OCI-LY7 (cell line): ENCODE measurements at regions of chr6 and their contacts with region 1.

Region 1: GRCh38 chr6:142146828-142147662 is at the starts of genes NMBR and VTA1:
- DNase-seq: peak; percentile 99
- H3K4me3 ChIP-seq: peak within 1 kb of the TSS; percentile 96
- H3K27ac ChIP-seq: peak within 1 kb of the TSS; percentile 26
- H3K4me1 ChIP-seq: peaks cover 20% of the 10 kb centered on the region
- CTCF ChIP-seq: peak; percentile 97
- total RNA-seq, gene NMBR: not detected in 2 replicates
- total RNA-seq, gene VTA1: 21.6 and 37.9 TPM in 2 replicates

Region 2: GRCh38 chr6:140697585-140697984 is 1449.5 kb before region 1 on chr6:
- CTCF ChIA-PET with region 1: no interaction called
- POLR2A ChIA-PET with region 1: no interaction called
- intact Hi-C with region 1: no loop called
- DNase-seq: no peak
- H3K4me3 ChIP-seq: no peak overlapping the region
- H3K27ac ChIP-seq: no peak overlapping the region
- H3K4me1 ChIP-seq: no peaks in the 10 kb centered on the region
- CTCF ChIP-seq: no peak

Region 3: DNA sequence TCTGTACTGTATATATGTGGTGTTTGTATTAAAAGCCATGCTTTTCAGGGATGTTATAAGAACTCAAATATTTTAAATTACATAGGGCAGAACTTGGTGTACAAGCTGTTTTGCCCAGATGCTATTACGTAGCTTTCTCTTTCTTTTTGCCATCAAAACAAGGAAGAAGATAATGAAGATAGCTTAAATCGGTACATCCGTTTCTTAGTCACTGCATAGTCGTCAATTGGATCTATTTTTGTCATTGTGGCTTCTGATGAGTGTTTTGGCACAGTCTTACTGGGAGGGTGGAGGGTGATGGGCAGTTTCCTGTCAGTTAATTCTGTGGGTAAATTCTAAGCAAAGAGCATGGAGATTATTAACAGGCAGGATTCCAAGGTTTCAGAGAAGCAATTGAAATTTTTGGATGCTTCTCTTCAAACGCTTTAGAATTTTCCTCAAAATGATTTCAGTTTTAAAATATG is 663.4 kb before region 1 on chr6:
- CTCF ChIA-PET with region 1: no interaction called
- POLR2A ChIA-PET with region 1: no interaction called
- intact Hi-C with region 1: loop called (anchors 10 kb)
- DNase-seq: peak; percentile 93
- H3K4me3 ChIP-seq: peak overlapping the region; percentile 59
- H3K27ac ChIP-seq: peak overlapping the region; percentile 90
- H3K4me1 ChIP-seq: peaks cover 66% of the 10 kb centered on the region
- CTCF ChIP-seq: no peak

Region 4: DNA sequence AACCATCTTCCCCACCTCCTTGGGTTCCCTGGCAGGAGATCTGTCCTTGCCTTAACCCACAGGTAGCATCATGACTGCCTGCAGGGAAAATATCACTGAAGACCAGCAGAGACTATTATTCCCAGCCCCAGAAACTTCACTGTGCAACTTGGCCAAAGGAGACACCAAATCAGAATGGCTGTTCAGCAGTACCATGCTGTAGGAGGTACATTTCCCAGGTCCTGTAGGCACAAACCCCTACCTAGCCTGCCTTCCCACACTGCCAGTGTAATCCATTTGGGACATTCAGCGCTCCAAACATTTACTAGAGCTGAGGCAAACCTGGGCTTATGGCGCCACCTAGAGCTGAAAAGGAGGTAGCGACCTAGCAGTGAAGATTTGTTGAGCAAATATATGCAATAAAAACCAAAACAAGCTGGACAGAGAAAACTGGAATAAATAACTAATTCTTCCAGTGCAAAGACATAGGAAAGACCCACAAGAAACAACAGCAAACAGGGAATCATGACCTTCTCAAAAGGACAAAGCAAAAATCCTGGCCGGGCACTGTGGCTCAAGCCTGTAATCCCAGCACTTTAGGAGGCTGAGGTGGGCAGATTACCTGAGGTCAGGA is 60.3 kb after region 1 on chr6:
- CTCF ChIA-PET with region 1: interaction called, 3 read pairs
- POLR2A ChIA-PET with region 1: no interaction called
- intact Hi-C with region 1: loop called (anchors 2 kb)
- DNase-seq: peak; percentile 44
- H3K4me3 ChIP-seq: no peak overlapping the region
- H3K27ac ChIP-seq: no peak overlapping the region
- H3K4me1 ChIP-seq: no peaks in the 10 kb centered on the region
- CTCF ChIP-seq: peak; percentile 90

Region 5: DNA sequence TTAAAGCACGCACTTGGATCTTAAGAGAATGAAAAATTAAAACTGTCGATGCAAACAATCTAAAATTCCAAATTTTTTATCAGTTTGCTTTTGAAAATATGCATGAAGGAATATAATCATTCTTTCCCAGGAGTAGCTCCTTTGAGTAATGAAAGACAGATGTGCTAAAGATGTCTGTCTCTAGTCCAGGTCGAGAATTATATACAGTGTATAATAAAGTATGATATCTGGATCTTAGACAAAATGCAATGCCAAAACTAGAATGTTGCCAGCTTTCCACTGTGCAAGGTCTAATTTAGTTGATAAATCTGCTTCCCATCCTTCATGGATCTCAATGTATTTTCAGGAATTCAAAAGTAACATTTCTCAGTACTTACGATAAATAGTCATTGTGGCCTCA is 89.6 kb after region 1 on chr6:
- CTCF ChIA-PET with region 1: no interaction called
- POLR2A ChIA-PET with region 1: no interaction called
- intact Hi-C with region 1: loop called (anchors 1 kb)
- DNase-seq: no peak
- H3K4me3 ChIP-seq: no peak overlapping the region
- H3K27ac ChIP-seq: no peak overlapping the region
- H3K4me1 ChIP-seq: peaks cover 4% of the 10 kb centered on the region
- CTCF ChIP-seq: no peak

Region 6: GRCh38 chr6:142387997-142388815 is 241.2 kb after region 1 on chr6:
- CTCF ChIA-PET with region 1: no interaction called
- POLR2A ChIA-PET with region 1: no interaction called
- intact Hi-C with region 1: loop called (anchors 2 kb)
- DNase-seq: peak; percentile 41
- H3K4me3 ChIP-seq: no peak overlapping the region
- H3K27ac ChIP-seq: no peak overlapping the region
- H3K4me1 ChIP-seq: no peaks in the 10 kb centered on the region
- CTCF ChIP-seq: peak; percentile 77

Region 7: GRCh38 chr6:142474531-142475289 is 327.7 kb after region 1 on chr6:
- CTCF ChIA-PET with region 1: no interaction called
- POLR2A ChIA-PET with region 1: no interaction called
- intact Hi-C with region 1: loop called (anchors 5 kb)
- DNase-seq: peak; percentile 47
- H3K4me3 ChIP-seq: no peak overlapping the region
- H3K27ac ChIP-seq: no peak overlapping the region
- H3K4me1 ChIP-seq: no peaks in the 10 kb centered on the region
- CTCF ChIP-seq: peak; percentile 96

Region 8: GRCh38 chr6:143450453-143451371 is 1303.7 kb after region 1 on chr6 and contains the starts of genes ADAT2 and PEX3:
- CTCF ChIA-PET with region 1: no interaction called
- POLR2A ChIA-PET with region 1: no interaction called
- intact Hi-C with region 1: loop called (anchors 10 kb)
- DNase-seq: peak; percentile 95
- H3K4me3 ChIP-seq: peak within 1 kb of the TSS; percentile 94
- H3K27ac ChIP-seq: peak within 1 kb of the TSS; percentile 72
- H3K4me1 ChIP-seq: peaks cover 36% of the 10 kb centered on the region
- CTCF ChIP-seq: no peak
- total RNA-seq, gene ADAT2: 17.6 and 21.7 TPM in 2 replicates
- total RNA-seq, gene PEX3: 10.9 and 14.8 TPM in 2 replicates